ENCODE measurements at regions of chr2 and their contacts with region 1.

Region 1: GRCh38 chr2:67840460-67841068 is 222.2 kb downstream of the C1D start:
- DNase-seq: peak; percentile 56
- H3K4me3 ChIP-seq: no peak overlapping the region
- H3K27ac ChIP-seq: no peak overlapping the region
- H3K4me1 ChIP-seq: no peaks in the 10 kb centered on the region
- H3K27me3 ChIP-seq: no peaks in the 10 kb centered on the region
- CTCF ChIP-seq: peak; percentile 93 to 95

Region 2: DNA sequence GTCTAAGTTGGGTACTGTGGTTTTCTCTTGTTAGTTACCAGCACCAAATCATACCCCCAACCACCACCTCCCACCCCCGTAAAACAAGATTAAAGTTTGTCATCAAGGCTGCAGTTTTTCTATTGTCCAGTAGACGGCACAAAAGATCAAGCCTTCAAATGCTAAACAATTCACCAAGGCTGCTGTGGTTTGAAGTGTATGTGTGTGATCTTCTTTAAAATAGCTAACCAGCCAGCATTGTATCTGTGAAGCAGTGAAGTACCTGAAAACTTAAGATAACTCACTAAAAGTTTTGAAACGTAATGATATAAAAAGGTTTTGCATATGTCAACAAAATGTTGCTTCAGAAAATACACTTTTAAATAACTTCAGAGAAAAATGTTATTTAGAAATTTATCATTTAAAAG is 1411.5 kb before region 1 on chr2:
- CTCF ChIA-PET with region 1: no interaction called
- dilution Hi-C with region 1: no loop called
- in situ Hi-C with region 1: loop called (anchors 25 kb)
- intact Hi-C with region 1: loop called (anchors 1 kb)
- DNase-seq: peak; percentile 41
- H3K4me3 ChIP-seq: no peak overlapping the region
- H3K27ac ChIP-seq: no peak overlapping the region
- H3K4me1 ChIP-seq: peaks cover 4% of the 10 kb centered on the region
- H3K27me3 ChIP-seq: peaks cover 23% of the 10 kb centered on the region
- CTCF ChIP-seq: peak; percentile 93 to 95

Region 3: DNA sequence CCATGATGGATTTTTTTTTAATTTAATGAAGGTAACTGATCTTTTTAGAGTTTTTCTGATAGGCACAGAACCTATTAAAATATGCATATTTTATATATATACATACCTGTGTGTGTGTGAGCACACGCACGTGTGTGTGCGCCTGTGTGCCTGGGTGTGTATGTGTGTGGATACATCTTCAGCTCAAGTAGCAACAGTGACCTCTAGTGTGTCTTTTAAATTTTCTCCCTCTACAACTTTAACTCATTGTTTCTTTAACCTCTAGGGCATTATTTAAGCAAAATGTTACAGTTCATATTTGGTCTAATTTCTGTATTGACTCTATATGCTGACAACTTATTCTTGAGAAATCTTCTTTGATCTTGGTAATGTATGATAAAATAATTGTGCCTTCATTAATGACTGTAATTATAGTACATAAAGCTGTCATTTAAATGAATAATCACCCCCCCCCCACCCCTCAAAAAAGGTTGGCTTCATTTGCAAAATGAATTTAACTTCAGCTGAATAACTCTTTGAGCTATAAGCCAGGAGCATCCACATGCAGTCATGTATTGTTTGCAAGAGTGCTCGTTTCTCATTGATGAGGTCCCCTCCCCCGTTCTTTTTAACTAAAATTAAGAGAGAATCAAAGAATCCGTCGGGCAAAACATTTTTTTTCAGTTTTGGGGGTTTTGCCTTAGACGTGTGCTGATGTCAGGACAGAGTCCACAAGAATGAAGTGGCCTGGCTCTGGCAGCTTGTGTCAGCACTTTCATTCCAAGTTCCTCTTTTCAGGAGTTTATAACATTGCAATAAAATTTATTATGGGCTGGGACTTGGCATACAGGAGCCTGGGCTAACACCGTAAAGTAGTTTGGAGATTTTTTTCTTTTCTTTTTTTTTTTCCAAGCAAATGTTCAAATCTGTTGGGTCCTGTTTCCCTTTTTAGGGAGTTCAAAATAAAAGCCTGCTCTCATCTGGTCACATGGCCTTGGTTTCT is 363.5 kb before region 1 on chr2:
- CTCF ChIA-PET with region 1: no interaction called
- dilution Hi-C with region 1: no loop called
- in situ Hi-C with region 1: loop called in 1 of 2 experiments (anchors 25 kb)
- intact Hi-C with region 1: loop called (anchors 1 kb)
- DNase-seq: peak; percentile 41
- H3K4me3 ChIP-seq: no peak overlapping the region
- H3K27ac ChIP-seq: no peak overlapping the region
- H3K4me1 ChIP-seq: no peaks in the 10 kb centered on the region
- H3K27me3 ChIP-seq: no peaks in the 10 kb centered on the region
- CTCF ChIP-seq: peak; percentile 52 to 72

Region 4: GRCh38 chr2:67650291-67651133 is 190.1 kb before region 1 on chr2:
- CTCF ChIA-PET with region 1: no interaction called
- dilution Hi-C with region 1: no loop called
- in situ Hi-C with region 1: no loop called
- intact Hi-C with region 1: loop called (anchors 1 kb)
- DNase-seq: peak; percentile 67
- H3K4me3 ChIP-seq: no peak overlapping the region
- H3K27ac ChIP-seq: no peak overlapping the region
- H3K4me1 ChIP-seq: peaks cover 8% of the 10 kb centered on the region
- H3K27me3 ChIP-seq: no peaks in the 10 kb centered on the region
- CTCF ChIP-seq: peak; percentile 80 to 91

Region 5: DNA sequence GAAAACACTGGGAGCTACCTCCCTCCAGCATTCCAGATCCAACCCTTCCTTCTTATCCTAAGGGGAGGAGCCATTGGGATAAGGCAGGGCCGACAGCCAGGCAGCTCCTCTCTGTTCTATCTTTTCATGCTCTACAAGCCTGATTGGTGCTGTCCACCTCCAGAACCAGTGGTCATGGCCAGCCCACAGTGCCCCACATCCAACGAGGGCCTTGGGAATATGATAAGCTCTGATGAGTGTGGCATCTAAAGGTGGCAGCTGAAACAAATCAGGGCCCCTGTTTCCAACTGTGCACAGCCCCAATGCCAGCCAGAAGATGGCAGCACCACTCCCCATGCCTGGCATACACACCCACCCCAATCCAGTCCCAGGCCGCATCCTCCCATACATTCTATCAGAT is 107.0 kb before region 1 on chr2:
- CTCF ChIA-PET with region 1: no interaction called
- dilution Hi-C with region 1: no loop called
- in situ Hi-C with region 1: loop called in 1 of 2 experiments (anchors 10 kb)
- intact Hi-C with region 1: loop called (anchors 1 kb)
- DNase-seq: peak; percentile 6
- H3K4me3 ChIP-seq: no peak overlapping the region
- H3K27ac ChIP-seq: no peak overlapping the region
- H3K4me1 ChIP-seq: no peaks in the 10 kb centered on the region
- H3K27me3 ChIP-seq: no peaks in the 10 kb centered on the region
- CTCF ChIP-seq: peak; percentile 50 to 83

Region 6: GRCh38 chr2:67797801-67798540 is 42.6 kb before region 1 on chr2:
- CTCF ChIA-PET with region 1: no interaction called
- dilution Hi-C with region 1: loop called (anchors 5 kb)
- in situ Hi-C with region 1: no loop called
- intact Hi-C with region 1: no loop called
- DNase-seq: peak; percentile 2
- H3K4me3 ChIP-seq: no peak overlapping the region
- H3K27ac ChIP-seq: no peak overlapping the region
- H3K4me1 ChIP-seq: peaks cover 3% of the 10 kb centered on the region
- H3K27me3 ChIP-seq: no peaks in the 10 kb centered on the region
- CTCF ChIP-seq: no peak

Region 7: GRCh38 chr2:67871686-67872412 is 31.3 kb after region 1 on chr2:
- CTCF ChIA-PET with region 1: no interaction called
- dilution Hi-C with region 1: no loop called
- in situ Hi-C with region 1: no loop called
- intact Hi-C with region 1: no loop called
- DNase-seq: no peak
- H3K4me3 ChIP-seq: no peak overlapping the region
- H3K27ac ChIP-seq: no peak overlapping the region
- H3K4me1 ChIP-seq: no peaks in the 10 kb centered on the region
- H3K27me3 ChIP-seq: no peaks in the 10 kb centered on the region
- CTCF ChIP-seq: no peak

Region 8: DNA sequence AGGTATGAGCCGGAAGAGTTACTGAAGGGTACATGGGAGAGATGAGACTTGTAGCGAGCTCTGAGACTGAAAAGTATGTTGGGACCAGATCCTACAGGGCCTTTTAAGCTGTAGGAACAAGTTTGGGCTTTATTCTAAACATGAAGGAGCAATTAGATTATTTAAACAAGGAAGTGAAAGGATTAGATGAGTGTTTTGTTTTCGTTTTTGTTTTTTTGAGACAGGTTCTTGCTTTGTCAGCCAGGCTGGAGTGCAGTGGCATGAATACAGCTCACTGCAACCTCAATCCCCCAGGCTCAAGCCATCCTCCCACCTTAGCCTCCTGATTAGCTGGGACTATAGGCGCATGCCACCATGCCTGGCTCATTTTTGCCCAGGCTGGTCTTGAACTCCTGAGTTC is 111.5 kb after region 1 on chr2:
- CTCF ChIA-PET with region 1: no interaction called
- dilution Hi-C with region 1: no loop called
- in situ Hi-C with region 1: no loop called
- intact Hi-C with region 1: no loop called
- DNase-seq: no peak
- H3K4me3 ChIP-seq: no peak overlapping the region
- H3K27ac ChIP-seq: no peak overlapping the region
- H3K4me1 ChIP-seq: no peaks in the 10 kb centered on the region
- H3K27me3 ChIP-seq: no peaks in the 10 kb centered on the region
- CTCF ChIP-seq: no peak